ENCODE measurements at regions of chr5 and their contacts with region 1.

Region 1: GRCh38 chr5:150846654-150847333 is 473 bp downstream of the IRGM start:
- DNase-seq: peak; percentile 54
- H3K4me3 Mint-ChIP-seq: peak overlapping the region; percentile 79
- H3K27ac Mint-ChIP-seq: peak overlapping the region; percentile 70
- H3K4me1 Mint-ChIP-seq: peaks cover 19% of the 10 kb centered on the region
- H3K27me3 Mint-ChIP-seq: no peaks in the 10 kb centered on the region

Region 2: DNA sequence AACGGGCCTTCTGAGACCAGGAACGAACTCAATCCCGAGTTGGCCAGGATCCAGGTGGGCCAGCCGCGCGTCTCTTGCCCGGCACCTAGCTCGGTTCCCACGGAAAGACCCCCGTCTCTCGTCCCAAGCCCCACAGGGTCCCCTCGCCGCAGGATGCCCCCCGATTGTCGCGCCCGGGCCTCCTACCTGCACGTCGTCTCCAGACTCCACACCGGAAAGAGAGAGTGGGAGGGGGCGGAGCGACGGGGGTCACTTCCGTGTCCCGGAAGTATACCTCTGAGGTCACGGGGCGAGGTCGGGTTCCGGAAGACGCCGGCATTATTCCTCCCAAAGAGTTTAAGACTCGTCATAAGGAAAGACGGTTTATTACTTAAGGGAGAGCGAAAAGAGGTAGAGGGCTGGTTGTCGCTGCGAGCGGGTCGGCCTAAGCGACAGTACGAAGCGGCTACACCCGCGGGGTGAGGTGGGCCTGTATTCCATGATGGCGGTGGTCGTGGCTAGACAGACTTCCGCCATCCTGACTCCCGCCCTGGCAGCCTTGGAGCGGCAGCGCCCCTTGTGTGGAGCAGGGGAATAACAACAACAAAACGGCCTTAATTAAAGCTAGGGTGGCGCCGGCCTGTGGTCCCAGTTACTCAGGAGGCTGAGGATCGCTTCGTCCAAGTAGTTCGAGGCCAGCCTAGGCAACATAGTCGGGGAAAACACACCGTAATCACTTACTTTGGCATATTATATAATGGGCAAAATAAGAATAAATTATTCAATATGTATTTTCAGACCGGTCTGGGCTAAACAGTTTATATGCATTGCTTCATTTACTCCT is 397.1 kb before region 1 on chr5 and contains the start of gene RPS14:
- intact Hi-C with region 1: loop called (anchors 1 kb)
- DNase-seq: peak; percentile 91
- H3K4me3 Mint-ChIP-seq: peak within 1 kb of the TSS; percentile 92
- H3K27ac Mint-ChIP-seq: peak within 1 kb of the TSS; percentile 100
- H3K4me1 Mint-ChIP-seq: peaks cover 40% of the 10 kb centered on the region
- H3K27me3 Mint-ChIP-seq: peaks cover 2% of the 10 kb centered on the region
- total RNA-seq, gene RPS14: 2,328 and 2,429 TPM in 2 replicates

Region 3: GRCh38 chr5:150503977-150504620 is 342.7 kb before region 1 on chr5:
- intact Hi-C with region 1: no loop called
- DNase-seq: no peak
- H3K4me3 Mint-ChIP-seq: no peak overlapping the region
- H3K27ac Mint-ChIP-seq: no peak overlapping the region
- H3K4me1 Mint-ChIP-seq: no peaks in the 10 kb centered on the region
- H3K27me3 Mint-ChIP-seq: peaks cover 1% of the 10 kb centered on the region

Region 4: GRCh38 chr5:150560401-150561193 is 286.2 kb before region 1 on chr5:
- intact Hi-C with region 1: loop called (anchors 1 kb)
- DNase-seq: peak; percentile 71
- H3K4me3 Mint-ChIP-seq: no peak overlapping the region
- H3K27ac Mint-ChIP-seq: no peak overlapping the region
- H3K4me1 Mint-ChIP-seq: no peaks in the 10 kb centered on the region
- H3K27me3 Mint-ChIP-seq: peaks cover 7% of the 10 kb centered on the region

Region 5: DNA sequence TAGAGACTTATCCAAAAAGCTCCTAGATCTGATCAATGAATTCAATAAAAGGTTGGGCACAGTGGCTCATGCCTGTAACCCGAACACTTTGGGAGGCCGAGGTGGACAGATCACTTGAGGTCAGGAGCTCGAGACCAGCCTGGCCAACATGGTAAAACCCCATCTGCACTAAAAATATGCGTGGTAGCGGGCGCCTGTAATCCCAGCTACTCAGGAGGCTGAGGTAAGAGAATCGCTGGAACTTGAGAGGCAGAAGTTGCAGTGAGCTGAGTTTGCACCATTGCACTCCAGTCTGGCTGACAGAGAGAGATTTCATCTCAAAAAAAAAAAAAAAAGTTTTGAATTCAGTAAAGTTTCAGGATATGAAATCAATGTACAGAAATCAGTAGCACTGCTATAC is 107.9 kb before region 1 on chr5:
- intact Hi-C with region 1: loop called (anchors 2 kb)
- DNase-seq: no peak
- H3K4me3 Mint-ChIP-seq: no peak overlapping the region
- H3K27ac Mint-ChIP-seq: no peak overlapping the region
- H3K4me1 Mint-ChIP-seq: peaks cover 85% of the 10 kb centered on the region
- H3K27me3 Mint-ChIP-seq: no peaks in the 10 kb centered on the region

Region 6: GRCh38 chr5:150778517-150779396 is 68.0 kb before region 1 on chr5 and contains the start of gene SMIM3:
- intact Hi-C with region 1: loop called (anchors 1 kb)
- DNase-seq: peak; percentile 53
- H3K4me3 Mint-ChIP-seq: peak within 1 kb of the TSS; percentile 100
- H3K27ac Mint-ChIP-seq: peak within 1 kb of the TSS; percentile 83
- H3K4me1 Mint-ChIP-seq: peaks cover 62% of the 10 kb centered on the region
- H3K27me3 Mint-ChIP-seq: peaks cover 2% of the 10 kb centered on the region
- total RNA-seq, gene SMIM3: 12.8 and 13.4 TPM in 2 replicates

Region 7: DNA sequence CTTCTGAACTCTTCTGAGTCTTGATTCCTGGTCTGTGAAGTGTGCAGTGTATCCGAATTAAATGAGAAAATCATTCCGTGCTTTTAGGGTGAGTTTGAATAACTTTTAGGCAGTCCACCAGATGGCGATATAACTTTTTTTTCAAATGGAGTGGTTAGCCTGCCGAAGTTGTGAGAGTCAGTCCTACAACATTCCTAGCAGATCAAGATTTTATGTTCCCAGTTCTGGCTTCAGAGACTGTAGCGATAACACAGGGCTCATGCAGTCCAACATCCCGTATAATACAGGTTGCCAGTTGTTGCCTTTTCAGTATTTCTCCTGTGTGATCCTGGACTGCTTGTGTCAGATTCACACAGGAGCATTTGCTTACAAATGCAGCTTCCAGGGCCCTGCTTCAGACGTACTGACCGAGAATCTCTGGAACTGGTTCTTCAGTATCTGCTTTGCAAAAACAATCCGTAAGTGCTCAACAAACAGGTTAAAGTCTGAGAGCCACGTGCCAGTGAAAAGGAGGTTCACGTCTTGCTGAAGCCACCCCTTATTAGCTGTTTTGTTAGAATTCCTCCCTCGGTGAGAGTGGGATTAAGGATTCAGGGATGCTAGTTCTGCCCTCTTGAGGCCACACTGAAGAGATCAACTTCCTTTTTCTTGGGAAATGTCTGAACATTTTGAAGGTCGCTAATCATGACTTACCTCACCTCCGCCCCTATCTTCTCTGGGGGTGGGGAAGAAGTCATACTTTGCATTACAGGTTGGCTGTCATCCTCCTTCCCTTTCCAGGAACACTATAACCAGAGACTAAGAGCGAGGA is 45.5 kb before region 1 on chr5:
- intact Hi-C with region 1: loop called (anchors 1 kb)
- DNase-seq: no peak
- H3K4me3 Mint-ChIP-seq: no peak overlapping the region
- H3K27ac Mint-ChIP-seq: no peak overlapping the region
- H3K4me1 Mint-ChIP-seq: peaks cover 20% of the 10 kb centered on the region
- H3K27me3 Mint-ChIP-seq: peaks cover 3% of the 10 kb centered on the region

Region 8: DNA sequence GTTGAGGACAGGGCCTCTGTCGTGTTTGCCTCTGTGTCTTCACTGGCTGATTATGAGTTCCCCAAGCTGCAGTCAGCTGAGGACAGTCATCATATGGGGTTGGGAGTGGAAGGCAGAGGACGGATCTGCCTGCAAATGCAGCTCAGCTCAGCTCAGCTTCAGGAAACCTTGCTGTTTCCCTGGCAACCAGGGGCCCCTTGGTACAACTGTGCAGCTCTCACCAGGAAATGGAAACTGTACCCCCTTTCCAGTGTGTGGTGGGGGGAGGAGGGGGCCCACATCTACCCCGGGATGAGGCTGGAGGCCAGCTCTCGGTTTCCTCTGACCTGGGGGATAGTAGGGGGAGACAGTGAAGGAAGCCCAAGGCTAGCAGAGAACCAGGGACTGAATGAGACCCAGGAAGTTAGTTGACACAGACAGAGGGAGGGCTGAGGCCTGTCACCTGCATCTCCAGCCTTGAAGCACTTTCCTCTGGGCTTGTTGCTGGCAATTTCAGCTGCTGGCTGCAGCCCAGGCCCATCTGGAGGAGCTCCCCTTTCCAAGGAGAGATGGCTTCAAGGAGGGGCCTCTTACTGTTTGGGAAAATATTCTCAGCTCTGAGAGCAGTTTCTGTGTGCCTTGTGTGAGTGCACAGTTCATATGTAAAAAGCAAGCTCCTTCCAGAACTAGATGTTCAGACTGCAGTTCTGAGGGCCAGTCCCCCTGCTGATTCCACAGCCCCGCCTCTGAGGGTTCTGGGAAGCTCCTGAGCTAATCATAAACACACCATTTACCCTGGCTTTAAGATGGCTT is 303.9 kb after region 1 on chr5:
- intact Hi-C with region 1: loop called (anchors 1 kb)
- DNase-seq: peak; percentile 67
- H3K4me3 Mint-ChIP-seq: peak overlapping the region; percentile 71
- H3K27ac Mint-ChIP-seq: peak overlapping the region; percentile 96
- H3K4me1 Mint-ChIP-seq: peaks cover 95% of the 10 kb centered on the region
- H3K27me3 Mint-ChIP-seq: no peaks in the 10 kb centered on the region